Activated CD4-positive, alpha-beta memory T cell treated with anti-CD3 and anti-CD28 coated beads, Interleukin-2, amount 10 ng/mL, durations not matched to agents 7 days and 5 days (primary cell): ENCODE measurements at regions of chr2 and their contacts with region 1.

Region 1: DNA sequence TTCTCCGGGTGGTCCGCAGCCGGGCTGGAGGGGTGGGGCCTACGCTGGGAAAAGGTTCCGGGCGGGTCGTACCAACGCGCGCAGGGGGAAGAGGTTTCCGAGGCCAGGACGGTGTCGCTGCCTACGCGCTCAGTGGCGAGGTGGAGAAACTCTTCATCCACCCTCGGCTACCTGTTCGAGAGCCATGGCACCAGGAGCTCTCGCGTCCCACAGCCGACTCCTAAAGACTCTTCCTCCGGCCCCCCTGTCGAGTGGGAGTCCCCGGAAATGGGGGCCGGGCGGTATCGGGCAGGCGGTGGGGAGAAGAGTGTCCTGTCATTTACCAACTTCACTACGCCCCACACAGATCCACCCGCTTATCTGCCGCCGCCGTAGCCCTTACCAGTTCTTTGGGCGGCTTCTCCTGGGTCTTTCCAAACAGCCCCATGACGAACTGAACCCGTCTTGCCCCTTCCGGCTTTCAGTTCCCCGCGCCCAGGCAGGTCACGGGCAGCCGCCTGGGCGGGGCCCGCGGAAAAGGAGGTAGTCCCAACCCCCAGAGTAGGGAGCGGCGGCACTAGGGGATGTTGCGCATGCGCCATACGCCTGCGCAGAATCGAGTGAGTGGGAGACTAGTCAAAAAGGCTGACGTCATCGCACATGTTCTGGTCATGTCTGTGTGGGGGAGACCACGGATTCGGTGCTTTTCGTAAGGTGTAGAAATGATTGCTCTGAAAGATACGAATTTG is at the start of gene CHMP3:
- DNase-seq: peak; percentile 96
- H3K4me3 Mint-ChIP-seq: peak within 1 kb of the TSS; percentile 95
- H3K27ac Mint-ChIP-seq: peak within 1 kb of the TSS; percentile 97
- H3K4me1 Mint-ChIP-seq: peaks cover 44% of the 10 kb centered on the region
- H3K27me3 Mint-ChIP-seq: peaks cover under 1% of the 10 kb centered on the region
- total RNA-seq, gene CHMP3: 39.1 to 41.5 TPM

Region 2: DNA sequence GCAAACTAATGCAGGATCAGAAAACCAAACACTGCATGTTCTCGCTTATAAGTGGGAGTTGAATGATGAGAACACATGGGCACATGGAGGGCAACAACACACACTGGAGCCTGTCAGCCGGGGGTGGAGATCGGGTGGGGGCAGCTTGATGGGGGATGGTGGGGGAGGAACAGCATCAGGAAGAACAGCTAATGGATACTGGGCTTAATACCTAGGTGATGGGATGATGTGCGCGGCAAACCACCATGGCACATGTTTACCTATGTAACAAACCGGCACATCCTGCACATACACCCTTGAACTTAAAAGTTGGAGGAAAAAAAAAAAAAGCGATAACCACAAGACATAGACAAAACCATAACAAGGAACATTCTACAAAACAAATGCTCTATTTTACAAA is 10.2 kb before region 1 on chr2:
- CTCF ChIA-PET with region 1: interaction called, 3 read pairs
- POLR2A ChIA-PET with region 1: interaction called, 10 read pairs
- DNase-seq: no peak
- H3K4me3 Mint-ChIP-seq: no peak overlapping the region
- H3K27ac Mint-ChIP-seq: no peak overlapping the region
- H3K4me1 Mint-ChIP-seq: peaks cover 15% of the 10 kb centered on the region
- H3K27me3 Mint-ChIP-seq: no peaks in the 10 kb centered on the region

Region 3: GRCh38 chr2:86584151-86584913 is 21.2 kb after region 1 on chr2:
- CTCF ChIA-PET with region 1: no interaction called
- POLR2A ChIA-PET with region 1: interaction called, 28 read pairs
- DNase-seq: peak; percentile 31
- H3K4me3 Mint-ChIP-seq: no peak overlapping the region
- H3K27ac Mint-ChIP-seq: peak overlapping the region; percentile 89
- H3K4me1 Mint-ChIP-seq: peaks cover 23% of the 10 kb centered on the region
- H3K27me3 Mint-ChIP-seq: peaks cover 4% of the 10 kb centered on the region

Region 4: GRCh38 chr2:86623651-86624541 is 60.8 kb after region 1 on chr2 and contains the start of gene RNF103:
- CTCF ChIA-PET with region 1: interaction called, 3 read pairs
- POLR2A ChIA-PET with region 1: interaction called, 55 read pairs
- DNase-seq: peak; percentile 91
- H3K4me3 Mint-ChIP-seq: peak within 1 kb of the TSS; percentile 90
- H3K27ac Mint-ChIP-seq: peak within 1 kb of the TSS; percentile 95
- H3K4me1 Mint-ChIP-seq: peaks cover 19% of the 10 kb centered on the region
- H3K27me3 Mint-ChIP-seq: peaks cover 23% of the 10 kb centered on the region
- total RNA-seq, gene RNF103: 18.9 to 19.9 TPM